HCT116 (cell line): ENCODE measurements at regions of chr3 and their contacts with region 1.

Region 1: DNA sequence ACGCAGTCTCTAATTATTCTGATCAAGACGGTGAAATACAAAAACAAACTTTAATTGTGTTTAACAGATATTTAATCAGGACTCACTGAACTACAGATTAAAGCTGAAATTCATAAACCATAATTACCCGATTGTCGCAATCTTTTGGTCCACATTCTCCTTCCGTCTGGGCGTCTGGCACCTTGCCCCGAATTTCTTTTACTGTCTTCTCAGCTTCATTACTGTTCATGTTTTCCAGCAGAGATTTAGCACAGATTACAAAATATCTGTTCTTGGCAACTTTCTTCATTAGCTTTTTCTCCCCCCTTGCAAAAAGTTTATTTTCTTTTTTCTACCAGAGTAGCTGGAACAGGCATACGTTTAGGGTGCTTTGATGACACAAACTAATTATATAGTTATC is 271.4 kb downstream of the TIGIT start:
- DNase-seq: no peak
- ATAC-seq: no peak
- H3K4me3 ChIP-seq: no peak overlapping the region
- H3K27ac ChIP-seq: peak overlapping the region; percentile 46; the same call in 1 of the 2 replicates
- H3K4me1 ChIP-seq: peaks cover 41 to 46% of the 10 kb centered on the region in 2 experiments
- H3K27me3 ChIP-seq: no peaks in the 10 kb centered on the region
- CTCF ChIP-seq: no peak
- POLR2A ChIP-seq: no peak
- RAD21 ChIP-seq: no peak

Region 2: GRCh38 chr3:113838631-113839209 is 726.5 kb before region 1 on chr3 and contains the start of gene GRAMD1C:
- CTCF ChIA-PET with region 1: no interaction called
- POLR2A ChIA-PET with region 1: no interaction called
- RAD21 ChIA-PET with region 1: no interaction called
- intact Hi-C with region 1: no loop called
- DNase-seq: peak; percentile 82
- ATAC-seq: peak; percentile 97
- H3K4me3 ChIP-seq: peak within 1 kb of the TSS; percentile 66 to 74
- H3K27ac ChIP-seq: peak within 1 kb of the TSS; percentile 21; the same call in 1 of the 2 replicates
- H3K4me1 ChIP-seq: peaks cover 0 to 15% of the 10 kb centered on the region in 2 experiments; a peak in 1 of 4 replicates
- H3K27me3 ChIP-seq: no peaks in the 10 kb centered on the region
- CTCF ChIP-seq: peak; percentile 73 to 90 (median 83)
- POLR2A ChIP-seq: no peak
- RAD21 ChIP-seq: peak; percentile 75
- total RNA-seq, gene GRAMD1C: 7.9 TPM

Region 3: GRCh38 chr3:114152519-114153151 is 412.6 kb before region 1 on chr3:
- CTCF ChIA-PET with region 1: no interaction called
- POLR2A ChIA-PET with region 1: no interaction called
- RAD21 ChIA-PET with region 1: no interaction called
- intact Hi-C with region 1: no loop called
- DNase-seq: peak; percentile 68
- ATAC-seq: peak; percentile 88
- H3K4me3 ChIP-seq: peak overlapping the region; percentile 41 to 57
- H3K27ac ChIP-seq: peak overlapping the region; percentile 41; the same call in 1 of the 2 replicates
- H3K4me1 ChIP-seq: peaks cover 0 to 11% of the 10 kb centered on the region in 2 experiments; a peak in 2 of 4 replicates
- H3K27me3 ChIP-seq: no peaks in the 10 kb centered on the region
- CTCF ChIP-seq: peak; percentile 88 to 97 (median 93)
- POLR2A ChIP-seq: no peak
- RAD21 ChIP-seq: peak; percentile 92

Region 4: DNA sequence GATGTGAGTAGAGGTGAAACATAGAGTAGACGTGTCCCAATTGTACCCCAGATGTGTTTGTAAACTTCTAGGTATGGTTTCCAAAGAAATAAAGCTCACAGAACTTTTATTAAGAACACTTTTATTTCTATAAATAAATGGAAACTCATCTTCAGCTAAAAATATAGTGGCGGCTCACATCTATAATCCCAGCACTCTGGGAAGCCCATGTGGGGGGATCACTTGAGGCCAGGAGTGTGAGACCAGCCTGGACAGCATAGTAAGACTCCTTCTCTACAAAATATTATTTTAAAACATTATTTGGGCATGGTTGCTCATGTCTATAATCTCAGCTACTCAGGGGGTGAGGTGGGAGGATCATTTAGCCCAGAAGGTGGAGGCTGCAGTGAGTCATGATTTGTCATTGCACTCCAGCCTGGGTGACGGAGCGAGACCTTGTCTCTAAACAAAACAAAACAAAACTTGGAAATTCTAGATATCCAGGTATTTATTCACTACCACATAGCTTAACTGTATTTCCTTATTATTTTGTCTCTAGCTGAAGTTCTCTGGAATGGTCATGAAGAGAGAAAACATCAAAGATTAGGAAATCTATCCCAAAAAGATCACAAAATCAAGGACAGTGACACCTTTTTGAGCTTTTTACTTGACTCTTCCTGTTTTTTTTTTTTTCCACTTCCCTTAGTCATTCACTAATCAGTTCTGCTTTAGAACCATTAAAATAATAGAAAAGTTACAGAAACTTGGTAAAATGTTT is 13.3 kb before region 1 on chr3:
- CTCF ChIA-PET with region 1: no interaction called
- POLR2A ChIA-PET with region 1: interaction called, 3 read pairs
- RAD21 ChIA-PET with region 1: no interaction called
- intact Hi-C with region 1: loop called (anchors 1 kb)
- DNase-seq: peak; percentile 85
- ATAC-seq: peak; percentile 90
- H3K4me3 ChIP-seq: peak overlapping the region in 1 of 2 experiments; percentile 23; a peak in 2 of 4 replicates
- H3K27ac ChIP-seq: peak overlapping the region; percentile 87
- H3K4me1 ChIP-seq: peaks cover 71 to 72% of the 10 kb centered on the region in 2 experiments
- H3K27me3 ChIP-seq: no peaks in the 10 kb centered on the region
- CTCF ChIP-seq: no peak
- POLR2A ChIP-seq: no peak
- RAD21 ChIP-seq: peak; percentile 15; the same call in 1 of the 2 replicates